Transverse colon (tissue), 4 donors: ENCODE measurements at regions of chr6 and their contacts with region 1.

Region 1: DNA sequence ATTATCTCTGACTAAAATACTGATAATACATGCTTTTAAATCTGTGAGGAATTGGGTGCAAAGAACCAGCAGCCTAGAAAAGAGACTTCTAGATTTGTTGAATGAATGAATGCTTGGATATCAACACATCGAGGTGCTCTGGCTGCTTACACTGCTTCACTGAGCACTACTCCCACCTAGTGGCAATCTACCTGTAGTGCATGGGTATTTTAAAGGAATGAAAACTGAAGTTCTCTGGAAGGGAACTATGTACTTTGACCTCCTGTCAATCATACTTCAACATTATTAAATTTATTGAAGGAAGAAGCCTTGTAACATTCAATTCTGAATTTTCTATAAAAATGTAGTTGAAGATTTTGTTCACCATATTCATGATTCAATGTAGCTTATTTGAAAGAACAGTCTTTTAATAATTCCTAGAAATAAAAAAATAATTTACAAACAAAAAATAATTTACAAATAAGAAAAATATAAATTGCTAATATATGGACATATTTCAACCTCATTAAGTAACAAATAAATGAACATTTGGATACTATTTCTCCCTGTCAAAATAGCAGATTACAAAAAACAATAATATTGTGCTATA is 111.2 kb upstream of the MMS22L start:
- DNase-seq: peak; percentile 28
- H3K4me3 ChIP-seq: no peak overlapping the region
- H3K27ac ChIP-seq: no peak overlapping the region
- H3K4me1 ChIP-seq: no peaks in the 10 kb centered on the region
- H3K27me3 ChIP-seq: no peaks in the 10 kb centered on the region
- CTCF ChIP-seq: peak; percentile 81 to 89 (median 86)
- EP300 ChIP-seq: no peak
- POLR2A ChIP-seq: no peak

Region 2: DNA sequence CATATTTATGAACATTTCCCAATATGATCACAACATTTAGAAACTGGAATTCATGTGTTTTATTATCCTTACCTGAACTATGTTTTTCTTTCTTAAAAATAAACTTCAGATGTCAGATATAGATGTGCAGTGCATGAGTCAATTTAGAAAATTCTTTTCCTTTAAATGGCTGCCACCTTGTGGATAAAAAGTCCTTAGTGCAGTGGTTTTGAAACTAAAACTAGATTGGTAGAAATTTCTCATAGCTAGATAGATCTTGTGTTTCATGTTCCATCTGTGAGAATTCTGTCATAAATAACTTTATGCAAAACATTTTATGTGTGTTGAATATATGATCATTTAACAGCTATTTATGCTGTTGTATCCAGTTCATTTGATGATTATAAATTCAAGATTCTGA is 334.8 kb before region 1 on chr6:
- in situ Hi-C with region 1: loop called in 3 of 4 experiments (anchors 10 to 25 kb)
- intact Hi-C with region 1: no loop called
- DNase-seq: no peak
- H3K4me3 ChIP-seq: no peak overlapping the region
- H3K27ac ChIP-seq: no peak overlapping the region
- H3K4me1 ChIP-seq: no peaks in the 10 kb centered on the region
- H3K27me3 ChIP-seq: no peaks in the 10 kb centered on the region
- CTCF ChIP-seq: peak; percentile 44 to 53 (median 46)
- EP300 ChIP-seq: no peak
- POLR2A ChIP-seq: no peak

Region 3: GRCh38 chr6:97068211-97068610 is 326.0 kb before region 1 on chr6:
- in situ Hi-C with region 1: loop called in 3 of 4 experiments (anchors 10 to 25 kb)
- intact Hi-C with region 1: no loop called
- DNase-seq: no peak
- H3K4me3 ChIP-seq: no peak overlapping the region
- H3K27ac ChIP-seq: no peak overlapping the region
- H3K4me1 ChIP-seq: no peaks in the 10 kb centered on the region
- H3K27me3 ChIP-seq: no peaks in the 10 kb centered on the region
- CTCF ChIP-seq: peak in 3 of 5 experiments; percentile 26 to 31 (median 28)
- EP300 ChIP-seq: no peak
- POLR2A ChIP-seq: no peak

Region 4: DNA sequence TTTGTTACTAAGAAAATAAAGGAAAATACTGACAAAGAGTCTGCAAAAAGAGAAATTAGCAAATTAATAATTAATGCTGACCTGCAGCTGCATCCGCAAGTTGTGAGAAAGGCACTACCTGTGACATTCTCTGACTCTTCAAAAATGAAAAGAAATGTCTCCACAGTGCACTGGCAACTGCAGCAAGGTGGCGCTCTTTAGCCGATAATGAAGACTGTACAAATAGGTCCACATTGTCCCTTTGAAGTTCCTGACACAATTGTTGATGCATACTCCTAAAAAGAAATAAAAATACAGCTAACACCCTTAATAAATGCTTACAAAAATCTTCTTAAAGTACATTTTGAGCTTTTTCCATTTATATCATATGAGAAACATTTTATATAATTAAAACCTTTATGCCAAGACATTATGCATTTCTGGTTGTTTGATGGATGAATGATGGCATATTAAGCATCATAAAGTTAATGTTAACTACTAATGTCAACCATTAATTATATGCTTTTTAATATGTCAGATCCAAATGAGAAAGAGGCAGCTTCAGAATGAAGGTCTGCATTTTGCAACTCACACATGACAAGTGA is 207.7 kb before region 1 on chr6:
- in situ Hi-C with region 1: loop called (anchors 5 to 10 kb)
- intact Hi-C with region 1: no loop called
- DNase-seq: peak; percentile 67
- H3K4me3 ChIP-seq: no peak overlapping the region
- H3K27ac ChIP-seq: no peak overlapping the region
- H3K4me1 ChIP-seq: no peaks in the 10 kb centered on the region
- H3K27me3 ChIP-seq: no peaks in the 10 kb centered on the region
- CTCF ChIP-seq: peak; percentile 62 to 83 (median 80)
- EP300 ChIP-seq: no peak
- POLR2A ChIP-seq: no peak

Region 5: GRCh38 chr6:97195117-97195516 is 199.1 kb before region 1 on chr6:
- in situ Hi-C with region 1: loop called in 1 of 4 experiments (anchors 10 kb)
- intact Hi-C with region 1: no loop called
- DNase-seq: no peak
- H3K4me3 ChIP-seq: no peak overlapping the region
- H3K27ac ChIP-seq: no peak overlapping the region
- H3K4me1 ChIP-seq: peaks cover 0 to 5% (median 0%) of the 10 kb centered on the region in 4 donors
- H3K27me3 ChIP-seq: no peaks in the 10 kb centered on the region
- CTCF ChIP-seq: no peak
- EP300 ChIP-seq: no peak
- POLR2A ChIP-seq: no peak

Region 6: DNA sequence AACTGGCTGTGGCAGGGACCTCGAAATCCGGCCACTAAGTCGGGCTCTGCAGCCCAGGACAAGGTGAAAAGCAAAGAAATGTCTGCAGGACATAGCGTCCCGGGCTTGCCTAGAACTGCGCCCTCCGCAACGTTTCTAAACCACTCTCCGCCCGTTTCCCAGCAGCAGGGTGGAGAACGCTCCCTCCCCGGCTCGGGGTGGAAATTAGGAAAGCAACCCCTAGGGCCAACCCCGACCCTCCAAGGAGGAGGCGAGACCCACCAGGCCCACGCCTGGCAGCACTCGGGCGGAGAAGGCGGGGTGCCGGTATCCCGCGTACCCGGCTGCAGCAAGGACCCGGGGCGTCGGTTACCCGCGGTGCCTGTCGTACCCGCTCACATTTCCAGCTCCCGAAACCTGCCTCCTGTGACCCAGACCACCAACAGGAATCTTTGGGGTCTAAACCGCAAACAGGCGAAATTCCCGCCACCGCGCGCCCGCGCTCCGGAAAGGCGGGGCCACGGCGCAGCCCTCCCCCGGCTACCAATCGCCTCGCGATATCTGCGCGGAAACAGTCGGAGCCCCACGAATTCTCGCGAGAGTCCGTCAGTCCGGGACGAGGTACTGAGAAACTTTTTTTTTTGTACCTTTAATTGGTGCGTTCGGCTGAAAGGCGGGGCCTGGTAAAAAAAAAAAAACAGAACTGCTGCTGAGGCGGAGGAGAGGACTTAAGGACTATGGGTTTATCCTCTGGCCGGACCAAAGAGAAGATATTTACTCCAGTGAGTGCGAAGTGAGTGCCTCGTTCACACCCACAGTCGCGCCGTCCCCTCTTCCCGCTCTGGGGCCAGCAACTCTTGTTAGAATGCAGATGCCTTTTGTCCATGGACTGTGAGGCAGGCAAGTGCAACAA is 111.3 kb before region 1 on chr6 and contains the start of gene MMS22L:
- in situ Hi-C with region 1: no loop called
- intact Hi-C with region 1: no loop called
- DNase-seq: peak; percentile 96
- H3K4me3 ChIP-seq: peak within 1 kb of the TSS; percentile 51 to 87 (median 80)
- H3K27ac ChIP-seq: peak within 1 kb of the TSS; percentile 67 to 81 (median 72)
- H3K4me1 ChIP-seq: peaks cover 5 to 20% (median 7%) of the 10 kb centered on the region in 4 donors
- H3K27me3 ChIP-seq: no peaks in the 10 kb centered on the region
- CTCF ChIP-seq: no peak
- EP300 ChIP-seq: no peak
- POLR2A ChIP-seq: no peak
- total RNA-seq, gene MMS22L: 2.4 to 12.6 (median 6.4) TPM

Region 7: GRCh38 chr6:97697456-97697855 is 303.2 kb after region 1 on chr6:
- in situ Hi-C with region 1: no loop called
- intact Hi-C with region 1: no loop called
- DNase-seq: no peak
- H3K4me3 ChIP-seq: no peak overlapping the region
- H3K27ac ChIP-seq: no peak overlapping the region
- H3K4me1 ChIP-seq: no peaks in the 10 kb centered on the region
- H3K27me3 ChIP-seq: no peaks in the 10 kb centered on the region
- CTCF ChIP-seq: no peak
- EP300 ChIP-seq: no peak
- POLR2A ChIP-seq: no peak

Region 8: DNA sequence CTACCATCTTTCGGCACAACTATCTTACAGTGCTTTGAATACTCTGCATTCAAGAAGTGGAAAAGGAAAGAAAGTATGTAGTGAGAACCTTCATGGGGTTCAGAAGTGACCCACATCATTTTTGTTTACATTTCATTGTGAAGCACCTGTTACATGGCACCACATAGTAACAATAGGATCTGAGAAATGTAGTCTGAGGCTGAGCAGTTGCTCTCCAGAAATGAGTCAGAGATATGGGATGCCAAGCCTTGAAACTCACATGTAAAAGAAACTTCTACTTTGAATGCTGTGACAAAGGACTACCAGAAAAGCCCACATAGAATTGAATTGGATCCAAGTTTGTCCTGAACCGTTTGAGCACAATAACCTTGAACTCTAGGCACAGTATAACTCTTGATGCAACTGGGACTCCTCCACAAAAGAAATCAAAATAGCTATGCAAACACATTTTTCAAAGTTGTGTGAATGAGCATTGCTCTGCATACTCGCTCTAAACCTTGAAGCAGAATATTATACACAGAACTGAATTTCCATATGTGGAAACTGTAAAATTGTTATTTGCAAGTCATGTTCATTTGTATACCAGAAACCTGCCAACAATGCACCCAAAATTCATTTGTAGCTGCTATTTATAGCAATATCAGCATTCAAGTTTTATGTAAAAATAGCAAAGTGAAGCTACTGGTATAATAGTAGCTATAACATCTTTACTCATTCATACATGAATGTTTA is 1039.2 kb after region 1 on chr6:
- in situ Hi-C with region 1: no loop called
- intact Hi-C with region 1: no loop called
- DNase-seq: no peak
- H3K4me3 ChIP-seq: no peak overlapping the region
- H3K27ac ChIP-seq: no peak overlapping the region
- H3K4me1 ChIP-seq: no peaks in the 10 kb centered on the region
- H3K27me3 ChIP-seq: no peaks in the 10 kb centered on the region
- CTCF ChIP-seq: no peak
- EP300 ChIP-seq: no peak
- POLR2A ChIP-seq: no peak